ENCODE measurements at regions of chr11 and their contacts with region 1.

Region 1: GRCh38 chr11:48109046-48109666 is 107.5 kb upstream of the OR4B1 start:
- DNase-seq: no peak
- ATAC-seq: peak; percentile 35
- H3K4me3 Mint-ChIP-seq: peak overlapping the region; percentile 67
- H3K27ac Mint-ChIP-seq: peak overlapping the region; percentile 93
- H3K4me1 Mint-ChIP-seq: peaks cover 56% of the 10 kb centered on the region
- H3K27me3 Mint-ChIP-seq: no peaks in the 10 kb centered on the region

Region 2: DNA sequence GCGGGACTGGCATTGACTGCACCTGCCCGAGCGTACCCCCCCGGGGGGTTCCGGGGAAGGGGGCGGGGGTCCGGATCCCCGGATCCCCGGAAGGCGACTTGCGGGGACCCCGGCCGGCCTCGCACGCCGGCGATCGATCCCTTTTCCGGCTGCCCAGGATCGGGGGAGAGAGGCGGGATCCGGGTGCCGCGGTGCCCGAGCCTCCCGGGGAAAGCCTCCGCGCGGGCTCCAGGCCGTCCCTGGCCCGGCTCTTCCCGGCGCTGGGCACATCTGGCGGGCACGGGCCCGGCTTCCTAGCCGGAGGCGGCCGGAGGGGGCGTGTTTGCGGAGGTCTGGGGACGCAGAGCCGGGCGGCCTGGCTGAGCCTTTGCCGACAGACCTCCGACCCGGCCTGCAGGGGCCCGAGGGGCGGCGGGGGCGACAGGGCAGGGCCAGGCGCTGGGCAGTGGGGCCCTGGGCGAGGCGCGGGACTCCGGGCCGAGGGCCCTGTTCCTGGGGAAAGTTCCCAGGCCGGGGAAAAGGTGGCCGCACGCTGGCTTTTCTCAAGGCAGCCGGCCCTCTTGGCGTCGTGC is 128.0 kb before region 1 on chr11:
- CTCF ChIA-PET with region 1: interaction called, 25 read pairs
- POLR2A ChIA-PET with region 1: no interaction called
- DNase-seq: no peak
- ATAC-seq: peak; percentile 54
- H3K4me3 Mint-ChIP-seq: peak overlapping the region; percentile 98
- H3K27ac Mint-ChIP-seq: no peak overlapping the region
- H3K4me1 Mint-ChIP-seq: peaks cover 33% of the 10 kb centered on the region
- H3K27me3 Mint-ChIP-seq: peaks cover 18% of the 10 kb centered on the region

Region 3: DNA sequence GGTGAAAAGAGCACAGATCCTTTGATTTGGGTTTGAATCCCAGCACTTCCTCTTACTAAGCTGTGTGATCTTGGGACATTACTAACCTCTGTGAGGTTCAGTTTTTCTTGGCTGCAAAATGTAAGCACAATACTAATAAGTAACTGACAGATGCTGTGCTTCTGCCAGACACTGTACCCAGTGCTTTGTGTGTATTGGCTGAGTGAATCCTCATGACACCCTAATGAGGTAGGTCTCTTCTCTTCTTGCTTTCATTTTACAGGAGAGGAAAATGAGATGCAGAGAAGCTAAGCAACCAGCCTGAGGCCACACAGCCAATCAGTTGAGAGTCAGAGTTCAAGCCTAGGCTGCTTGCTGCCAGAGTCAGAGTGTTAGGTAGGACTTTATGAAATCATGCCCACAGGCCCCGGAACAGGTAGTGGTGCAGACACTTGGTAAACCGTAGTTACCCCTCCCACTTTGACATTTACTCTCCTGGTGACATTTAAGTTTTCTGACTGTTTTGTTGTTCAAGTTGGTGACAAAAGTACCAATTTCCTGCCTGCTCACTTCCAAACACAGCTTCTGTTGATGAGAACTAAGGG is 107.6 kb before region 1 on chr11:
- CTCF ChIA-PET with region 1: interaction called, 24 read pairs
- POLR2A ChIA-PET with region 1: interaction called, 4 read pairs
- DNase-seq: peak; percentile 95
- ATAC-seq: peak; percentile 95
- H3K4me3 Mint-ChIP-seq: peak overlapping the region; percentile 52
- H3K27ac Mint-ChIP-seq: peak overlapping the region; percentile 97
- H3K4me1 Mint-ChIP-seq: peaks cover 91% of the 10 kb centered on the region
- H3K27me3 Mint-ChIP-seq: no peaks in the 10 kb centered on the region

Region 4: DNA sequence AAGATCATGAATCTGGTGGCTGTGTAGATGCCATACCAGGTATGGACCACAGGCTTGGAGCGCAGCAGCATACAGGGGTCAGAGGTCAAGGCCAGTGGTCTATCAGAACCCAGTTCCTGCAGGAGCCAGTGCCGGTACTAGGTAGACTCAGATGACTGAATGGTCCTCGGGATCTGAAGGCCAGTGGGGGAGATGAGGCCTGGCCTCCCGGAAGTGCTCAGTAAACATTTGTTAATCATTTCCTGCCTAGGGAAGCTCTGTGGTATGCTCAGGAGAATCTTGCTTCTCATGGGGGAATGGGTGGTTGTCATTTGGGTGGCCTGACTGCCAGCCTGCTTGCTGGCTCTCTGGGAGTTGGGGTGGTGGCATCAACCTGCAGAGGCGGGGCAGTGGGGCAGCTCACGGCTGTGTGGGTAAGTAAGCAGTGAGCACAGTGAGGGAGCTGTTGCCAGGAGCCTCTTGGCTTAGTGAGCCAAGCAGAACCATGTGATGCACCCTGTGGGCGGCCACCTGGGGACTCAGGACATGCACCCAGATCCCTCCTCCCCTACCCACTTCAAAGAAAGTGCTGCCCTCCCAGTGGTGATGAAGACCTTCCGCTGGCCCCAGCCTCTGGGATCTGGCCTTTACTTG is 95.8 kb before region 1 on chr11:
- CTCF ChIA-PET with region 1: interaction called, 14 read pairs
- POLR2A ChIA-PET with region 1: no interaction called
- DNase-seq: peak; percentile 66
- ATAC-seq: peak; percentile 57
- H3K4me3 Mint-ChIP-seq: peak overlapping the region; percentile 36
- H3K27ac Mint-ChIP-seq: peak overlapping the region; percentile 94
- H3K4me1 Mint-ChIP-seq: peaks cover 87% of the 10 kb centered on the region
- H3K27me3 Mint-ChIP-seq: no peaks in the 10 kb centered on the region

Region 5: GRCh38 chr11:48043111-48043990 is 65.8 kb before region 1 on chr11:
- CTCF ChIA-PET with region 1: interaction called, 17 read pairs
- POLR2A ChIA-PET with region 1: no interaction called
- DNase-seq: peak; percentile 50
- ATAC-seq: peak; percentile 78
- H3K4me3 Mint-ChIP-seq: peak overlapping the region; percentile 31
- H3K27ac Mint-ChIP-seq: peak overlapping the region; percentile 84
- H3K4me1 Mint-ChIP-seq: peaks cover 64% of the 10 kb centered on the region
- H3K27me3 Mint-ChIP-seq: no peaks in the 10 kb centered on the region

Region 6: GRCh38 chr11:48063424-48063978 is 45.7 kb before region 1 on chr11:
- CTCF ChIA-PET with region 1: interaction called, 67 read pairs
- POLR2A ChIA-PET with region 1: no interaction called
- DNase-seq: no peak
- ATAC-seq: no peak
- H3K4me3 Mint-ChIP-seq: no peak overlapping the region
- H3K27ac Mint-ChIP-seq: peak overlapping the region; percentile 48
- H3K4me1 Mint-ChIP-seq: peaks cover 53% of the 10 kb centered on the region
- H3K27me3 Mint-ChIP-seq: no peaks in the 10 kb centered on the region

Region 7: GRCh38 chr11:48184446-48184845 is 75.3 kb after region 1 on chr11:
- CTCF ChIA-PET with region 1: no interaction called
- POLR2A ChIA-PET with region 1: no interaction called
- DNase-seq: no peak
- ATAC-seq: no peak
- H3K4me3 Mint-ChIP-seq: no peak overlapping the region
- H3K27ac Mint-ChIP-seq: no peak overlapping the region
- H3K4me1 Mint-ChIP-seq: no peaks in the 10 kb centered on the region
- H3K27me3 Mint-ChIP-seq: peaks cover 4% of the 10 kb centered on the region